HCT116 (cell line): ENCODE measurements at regions of chr7 and their contacts with region 1.

Region 1: GRCh38 chr7:87231256-87231655 is 11.7 kb upstream of the TMEM243 start:
- DNase-seq: no peak
- ATAC-seq: no peak
- H3K4me3 ChIP-seq: no peak overlapping the region
- H3K27ac ChIP-seq: no peak overlapping the region
- H3K4me1 ChIP-seq: no peaks in the 10 kb centered on the region
- H3K27me3 ChIP-seq: no peaks in the 10 kb centered on the region
- CTCF ChIP-seq: no peak
- POLR2A ChIP-seq: no peak
- RAD21 ChIP-seq: no peak

Region 2: DNA sequence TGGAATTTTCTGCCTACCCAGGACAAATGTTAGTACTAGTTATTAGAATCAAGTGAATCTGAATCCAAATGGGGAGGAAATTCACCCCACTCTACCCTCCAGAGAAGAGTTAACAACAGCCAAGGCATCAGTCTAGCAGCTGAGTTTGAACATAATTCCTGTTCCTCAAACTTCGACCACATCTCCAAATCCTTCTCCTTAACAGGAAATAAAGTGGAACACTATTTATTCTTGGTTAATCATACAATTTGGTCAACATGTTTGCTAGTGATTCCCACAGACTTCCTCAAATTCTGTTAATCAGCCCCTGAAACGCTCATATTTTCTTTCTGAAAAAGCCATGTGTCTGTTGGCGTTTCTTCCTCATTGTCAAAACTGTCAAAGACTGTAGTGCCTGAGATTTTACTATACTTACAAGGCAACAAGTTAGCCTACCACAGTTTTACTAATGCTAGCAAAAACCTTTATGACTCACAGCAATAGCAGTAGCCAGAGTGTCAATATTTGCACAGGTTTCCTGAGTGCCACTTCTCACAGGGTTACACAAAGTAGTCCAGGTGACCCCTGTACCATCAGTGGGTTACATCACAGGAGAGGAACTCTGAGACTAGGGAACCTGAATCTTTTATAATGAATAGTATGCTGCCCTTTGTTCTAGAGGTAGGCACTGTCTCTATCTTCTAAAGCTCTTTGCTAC is 384.6 kb before region 1 on chr7:
- CTCF ChIA-PET with region 1: no interaction called
- POLR2A ChIA-PET with region 1: no interaction called
- RAD21 ChIA-PET with region 1: no interaction called
- intact Hi-C with region 1: no loop called
- DNase-seq: no peak
- ATAC-seq: no peak
- H3K4me3 ChIP-seq: no peak overlapping the region
- H3K27ac ChIP-seq: no peak overlapping the region
- H3K4me1 ChIP-seq: peaks cover 0 to 6% of the 10 kb centered on the region in 2 experiments; a peak in 1 of 4 replicates
- H3K27me3 ChIP-seq: no peaks in the 10 kb centered on the region
- CTCF ChIP-seq: no peak
- POLR2A ChIP-seq: no peak
- RAD21 ChIP-seq: no peak

Region 3: GRCh38 chr7:86914551-86914950 is 316.7 kb before region 1 on chr7:
- CTCF ChIA-PET with region 1: no interaction called
- POLR2A ChIA-PET with region 1: no interaction called
- RAD21 ChIA-PET with region 1: no interaction called
- intact Hi-C with region 1: loop called (anchors 5 kb)
- DNase-seq: no peak
- ATAC-seq: no peak
- H3K4me3 ChIP-seq: no peak overlapping the region
- H3K27ac ChIP-seq: no peak overlapping the region
- H3K4me1 ChIP-seq: no peaks in the 10 kb centered on the region
- H3K27me3 ChIP-seq: no peaks in the 10 kb centered on the region
- CTCF ChIP-seq: peak; percentile 44 to 70 (median 53); a peak in 5 of 6 replicates
- POLR2A ChIP-seq: no peak
- RAD21 ChIP-seq: peak; percentile 40

Region 4: DNA sequence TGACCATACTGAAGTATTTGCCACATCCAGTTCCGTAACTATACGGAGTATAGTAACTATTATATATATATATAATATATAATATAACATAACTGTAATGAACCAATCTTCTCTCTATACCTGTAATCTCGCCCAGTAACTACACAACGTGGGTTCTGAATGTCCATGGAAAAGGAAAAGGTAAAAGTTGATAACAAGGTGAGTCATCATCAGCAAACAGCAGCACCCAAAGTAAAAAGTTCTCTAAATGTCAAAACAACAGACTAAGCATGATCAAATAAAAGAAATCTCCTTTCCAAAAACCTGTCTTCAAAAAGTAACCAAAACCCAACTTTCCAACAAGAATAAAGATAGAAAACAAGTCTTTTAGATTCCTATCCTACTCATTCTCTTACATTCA is 214.7 kb before region 1 on chr7:
- CTCF ChIA-PET with region 1: no interaction called
- POLR2A ChIA-PET with region 1: no interaction called
- RAD21 ChIA-PET with region 1: no interaction called
- intact Hi-C with region 1: no loop called
- DNase-seq: no peak
- ATAC-seq: no peak
- H3K4me3 ChIP-seq: no peak overlapping the region
- H3K27ac ChIP-seq: no peak overlapping the region
- H3K4me1 ChIP-seq: peaks cover 3 to 4% of the 10 kb centered on the region in 2 experiments; a peak in 3 of 4 replicates
- H3K27me3 ChIP-seq: no peaks in the 10 kb centered on the region
- CTCF ChIP-seq: no peak
- POLR2A ChIP-seq: no peak
- RAD21 ChIP-seq: no peak

Region 5: DNA sequence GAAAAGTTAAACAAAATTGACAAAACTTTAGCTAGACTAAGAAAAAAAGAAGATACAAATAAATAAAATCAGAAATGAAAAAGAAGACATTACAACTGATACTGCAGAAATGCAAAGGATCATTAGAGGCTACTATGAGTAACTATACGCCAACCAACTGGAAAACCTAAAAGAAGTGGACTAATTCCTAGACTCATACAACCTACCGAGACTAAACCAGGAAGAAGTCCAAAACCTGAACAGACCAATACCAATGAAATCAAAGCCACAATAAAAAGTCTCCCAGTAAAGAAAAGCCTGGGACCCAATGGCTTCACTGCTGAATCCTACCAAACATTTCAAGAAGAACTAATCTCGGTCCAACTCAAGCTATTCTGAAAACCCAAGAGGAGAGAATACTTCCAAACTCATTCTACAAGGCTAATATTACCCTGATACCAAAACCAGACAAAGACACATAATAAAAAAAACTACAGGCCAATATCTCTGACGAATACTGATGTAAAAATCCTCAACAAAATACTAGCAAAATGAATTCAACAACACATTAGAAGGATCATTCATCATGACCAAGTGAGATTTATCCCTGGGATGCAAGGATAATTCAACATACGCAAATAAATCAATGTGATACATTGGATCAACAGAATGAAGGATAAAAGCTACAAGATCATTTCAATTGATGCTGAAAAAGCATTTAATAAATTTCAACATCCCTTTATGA is 192.1 kb before region 1 on chr7:
- CTCF ChIA-PET with region 1: no interaction called
- POLR2A ChIA-PET with region 1: no interaction called
- RAD21 ChIA-PET with region 1: no interaction called
- intact Hi-C with region 1: loop called (anchors 10 kb)
- DNase-seq: no peak
- ATAC-seq: peak; percentile 63
- H3K4me3 ChIP-seq: peak overlapping the region; percentile 78 to 81
- H3K27ac ChIP-seq: peak overlapping the region; percentile 59
- H3K4me1 ChIP-seq: no peaks in the 10 kb centered on the region
- H3K27me3 ChIP-seq: no peaks in the 10 kb centered on the region
- CTCF ChIP-seq: no peak
- POLR2A ChIP-seq: no peak
- RAD21 ChIP-seq: no peak

Region 6: GRCh38 chr7:87252166-87252565 is 20.9 kb after region 1 on chr7:
- CTCF ChIA-PET with region 1: no interaction called
- POLR2A ChIA-PET with region 1: no interaction called
- RAD21 ChIA-PET with region 1: no interaction called
- intact Hi-C with region 1: loop called (anchors 2 kb)
- DNase-seq: no peak
- ATAC-seq: no peak
- H3K4me3 ChIP-seq: no peak overlapping the region
- H3K27ac ChIP-seq: no peak overlapping the region
- H3K4me1 ChIP-seq: no peaks in the 10 kb centered on the region
- H3K27me3 ChIP-seq: no peaks in the 10 kb centered on the region
- CTCF ChIP-seq: no peak
- POLR2A ChIP-seq: no peak
- RAD21 ChIP-seq: no peak

Region 7: GRCh38 chr7:87416682-87417587 is 185.7 kb after region 1 on chr7:
- CTCF ChIA-PET with region 1: no interaction called
- POLR2A ChIA-PET with region 1: no interaction called
- RAD21 ChIA-PET with region 1: no interaction called
- intact Hi-C with region 1: loop called (anchors 5 kb)
- DNase-seq: peak; percentile 62
- ATAC-seq: peak; percentile 84
- H3K4me3 ChIP-seq: no peak overlapping the region
- H3K27ac ChIP-seq: no peak overlapping the region
- H3K4me1 ChIP-seq: no peaks in the 10 kb centered on the region
- H3K27me3 ChIP-seq: no peaks in the 10 kb centered on the region
- CTCF ChIP-seq: peak; percentile 52 to 75 (median 71)
- POLR2A ChIP-seq: no peak
- RAD21 ChIP-seq: peak; percentile 85